GM18951 (cell line): ENCODE measurements at regions of chr20 and their contacts with region 1.

Region 1: DNA sequence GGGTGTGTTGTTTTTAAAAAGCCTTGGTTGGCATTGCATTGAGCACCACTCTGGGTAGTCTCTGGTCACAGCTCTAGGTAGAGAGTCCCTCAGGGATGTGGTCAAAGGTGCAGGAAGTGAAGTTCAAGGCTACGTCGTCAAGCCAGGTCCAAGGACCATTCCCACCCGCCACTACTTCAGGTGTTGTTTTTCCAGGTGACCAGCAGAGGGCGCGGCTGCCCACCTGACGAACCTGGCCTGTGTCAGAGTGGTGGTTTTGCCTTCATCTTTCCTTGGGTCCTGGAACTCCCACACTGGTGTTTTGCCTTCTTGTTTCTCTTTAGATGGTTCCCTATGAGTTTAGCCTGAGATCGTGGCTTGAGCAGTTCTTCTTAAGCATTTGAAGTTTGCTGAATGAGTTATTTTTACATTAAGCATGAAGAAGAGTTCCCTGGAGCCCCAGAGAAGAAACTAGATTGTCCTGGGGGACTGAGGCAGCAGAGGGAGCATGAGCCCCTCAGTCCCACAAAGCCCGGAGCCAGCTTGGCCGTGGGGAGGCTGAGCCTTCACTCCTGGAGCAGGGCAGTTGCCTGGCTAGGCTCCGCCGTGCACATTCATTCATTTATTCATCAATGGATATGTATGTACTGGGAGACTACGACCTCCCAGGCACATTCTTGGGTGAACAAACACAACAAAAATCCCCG is 5.6 kb upstream of the PHACTR3 start:
- POLR2A ChIP-seq: no peak

Region 2: DNA sequence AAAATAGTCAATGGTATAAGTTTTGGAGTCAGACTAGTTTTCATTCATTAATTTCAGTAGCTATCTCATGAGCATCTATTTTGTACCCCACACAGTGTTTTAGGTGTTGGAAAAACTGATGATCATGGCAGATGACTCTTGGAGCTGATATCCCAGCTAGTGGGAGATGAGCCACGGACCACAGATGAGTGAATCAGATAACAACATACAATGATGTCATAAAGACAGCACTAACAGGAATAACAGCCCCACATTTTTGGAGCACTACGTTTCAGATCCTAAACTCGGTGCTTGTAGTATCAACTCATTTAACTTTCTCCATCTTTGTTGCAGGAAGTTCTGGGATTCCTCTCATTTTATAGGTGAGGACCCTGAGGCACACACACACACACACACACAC is 366.1 kb before region 1 on chr20:
- in situ Hi-C with region 1: no loop called
- POLR2A ChIP-seq: no peak

Region 3: DNA sequence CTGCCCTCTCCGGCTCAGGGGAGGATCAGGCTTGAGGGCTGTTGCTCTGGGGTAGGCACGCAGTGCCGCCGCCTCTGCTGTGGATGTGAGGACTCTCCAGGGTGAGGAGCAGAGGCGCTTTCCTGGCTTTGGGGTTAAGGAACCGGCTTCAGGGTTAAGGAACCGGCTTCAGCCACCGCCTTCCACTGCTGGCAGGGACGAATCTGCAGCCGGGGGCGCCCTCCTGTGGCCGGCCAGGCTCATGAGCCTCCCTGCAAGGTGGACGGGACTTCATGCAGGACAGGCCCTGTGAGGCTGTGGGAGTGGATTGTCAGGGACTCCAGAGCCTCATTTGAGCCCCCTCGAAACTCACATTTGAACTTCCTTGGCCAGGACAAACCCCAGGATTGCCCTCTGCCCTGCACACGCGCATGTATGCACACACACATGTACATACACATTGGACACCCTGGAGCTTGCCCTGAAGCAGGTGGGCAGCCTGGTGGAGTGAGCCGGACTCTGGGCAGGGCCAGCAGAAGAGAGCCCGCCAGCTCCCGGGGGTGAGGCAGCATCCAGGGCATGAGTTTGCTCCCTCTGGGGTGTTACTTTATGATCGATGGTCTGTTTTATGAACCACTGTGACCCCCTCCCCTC is 152.4 kb after region 1 on chr20:
- in situ Hi-C with region 1: loop called (anchors 25 kb)
- POLR2A ChIP-seq: no peak

Region 4: GRCh38 chr20:60228255-60228654 is 629.5 kb after region 1 on chr20:
- in situ Hi-C with region 1: no loop called
- POLR2A ChIP-seq: no peak